ENCODE measurements at regions of chr6 and their contacts with region 1.

Region 1: GRCh38 chr6:150600301-150601017 is 774 bp downstream of the PLEKHG1 start:
- DNase-seq: peak; percentile 89

Region 2: GRCh38 chr6:150417899-150418826 is 182.3 kb before region 1 on chr6:
- intact Hi-C with region 1: loop called in 1 of 2 experiments (anchors 10 kb)
- DNase-seq: no peak

Region 3: GRCh38 chr6:150478651-150479545 is 121.6 kb before region 1 on chr6:
- intact Hi-C with region 1: no loop called
- DNase-seq: no peak

Measured in posterior vena cava (tissue), 2 donors.